CD4-positive, alpha-beta memory T cell (primary cell): ENCODE measurements at regions of chr9 and their contacts with region 1.

Region 1: DNA sequence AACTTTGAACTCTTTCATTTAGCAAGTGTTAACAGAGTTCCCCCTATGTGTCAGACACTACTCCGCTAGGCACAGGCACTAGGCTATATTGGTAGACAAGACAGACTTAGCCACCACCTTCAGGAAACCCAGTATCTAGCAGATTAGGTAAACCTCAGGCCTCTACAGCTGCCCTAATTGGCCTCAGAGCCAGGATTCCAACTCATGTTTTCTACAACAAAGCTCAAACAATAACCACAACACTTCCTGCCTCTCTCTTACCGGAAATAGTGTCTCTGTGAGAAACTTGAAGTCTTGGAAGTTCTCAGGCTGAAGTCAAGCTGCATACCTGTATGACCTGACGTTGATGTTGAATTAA is 116.6 kb upstream of the SLC44A1 start:
- DNase-seq: peak; percentile 84 to 91 (median 89)
- H3K4me3 ChIP-seq: no peak overlapping the region
- H3K4me3 Mint-ChIP-seq: peak overlapping the region in 7 of 8 donors; percentile 33 to 81 (median 75)
- H3K27ac ChIP-seq: no peak overlapping the region
- H3K27ac Mint-ChIP-seq: peak overlapping the region; percentile 26 to 92 (median 83)
- H3K4me1 ChIP-seq: peaks cover 47% of the 10 kb centered on the region
- H3K4me1 Mint-ChIP-seq: peaks cover 40 to 63% (median 53%) of the 10 kb centered on the region in 4 donors
- H3K27me3 ChIP-seq: no peaks in the 10 kb centered on the region
- H3K27me3 Mint-ChIP-seq: peaks cover 0 to 1% of the 10 kb centered on the region in 2 donors

Region 2: DNA sequence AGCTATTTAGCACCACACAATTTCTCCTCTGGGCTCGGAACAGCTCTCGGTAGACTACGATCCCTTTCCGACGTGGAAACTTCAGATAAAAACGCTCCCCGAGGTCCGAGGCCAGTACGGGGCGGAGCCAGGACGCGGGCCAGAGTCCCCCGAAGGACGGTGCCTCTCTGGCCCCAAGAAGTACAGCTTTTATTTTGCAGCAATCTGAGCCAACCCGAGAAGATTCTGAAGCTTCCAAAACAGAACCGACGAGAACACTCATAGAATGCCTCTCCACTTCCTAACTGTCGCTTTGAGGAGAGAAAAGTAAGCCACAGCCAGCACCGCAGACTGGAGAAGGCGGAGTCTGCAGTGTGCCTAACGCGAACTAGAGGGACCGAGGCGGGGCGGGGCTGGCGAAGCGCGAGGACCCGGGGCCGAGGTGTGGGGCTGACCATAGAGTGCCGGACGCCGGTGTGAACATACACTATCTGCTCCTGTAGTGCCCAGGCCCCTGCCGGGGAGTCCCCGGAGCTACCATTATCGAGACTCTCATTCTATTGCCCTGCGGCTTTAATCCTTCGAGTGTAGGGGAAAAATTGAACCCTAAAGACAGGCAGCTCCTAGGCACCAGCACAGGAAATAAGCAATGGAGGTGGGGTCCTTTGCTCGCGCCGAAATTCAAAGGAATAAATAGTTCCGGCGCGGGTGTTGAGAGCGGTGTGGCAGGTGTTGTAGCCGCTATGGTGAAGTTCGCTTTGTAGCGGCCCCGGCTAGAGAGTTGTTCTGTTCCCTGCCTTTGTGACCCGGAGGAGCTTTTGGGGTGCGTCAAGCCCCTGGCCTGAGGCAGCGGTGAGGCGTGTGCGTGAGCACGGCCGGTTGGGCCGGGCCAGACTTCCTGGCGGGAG is 1034.0 kb before region 1 on chr9 and contains the start of gene SMC2:
- CTCF ChIA-PET with region 1: no interaction called
- POLR2A ChIA-PET with region 1: no interaction called
- intact Hi-C with region 1: loop called (anchors 5 kb)
- DNase-seq: peak; percentile 93 to 96 (median 95)
- H3K4me3 ChIP-seq: peak within 1 kb of the TSS; percentile 63 to 90
- H3K4me3 Mint-ChIP-seq: peak within 1 kb of the TSS; percentile 98 to 100 (median 99)
- H3K27ac ChIP-seq: peak within 1 kb of the TSS; percentile 79
- H3K27ac Mint-ChIP-seq: peak within 1 kb of the TSS; percentile 99 to 100 (median 99)
- H3K4me1 ChIP-seq: peaks cover 30% of the 10 kb centered on the region
- H3K4me1 Mint-ChIP-seq: peaks cover 26 to 46% (median 30%) of the 10 kb centered on the region in 4 donors
- H3K27me3 ChIP-seq: no peaks in the 10 kb centered on the region
- H3K27me3 Mint-ChIP-seq: peaks cover 0 to 3% of the 10 kb centered on the region in 2 donors
- total RNA-seq, gene SMC2: 9.7 to 10.4 TPM

Region 3: DNA sequence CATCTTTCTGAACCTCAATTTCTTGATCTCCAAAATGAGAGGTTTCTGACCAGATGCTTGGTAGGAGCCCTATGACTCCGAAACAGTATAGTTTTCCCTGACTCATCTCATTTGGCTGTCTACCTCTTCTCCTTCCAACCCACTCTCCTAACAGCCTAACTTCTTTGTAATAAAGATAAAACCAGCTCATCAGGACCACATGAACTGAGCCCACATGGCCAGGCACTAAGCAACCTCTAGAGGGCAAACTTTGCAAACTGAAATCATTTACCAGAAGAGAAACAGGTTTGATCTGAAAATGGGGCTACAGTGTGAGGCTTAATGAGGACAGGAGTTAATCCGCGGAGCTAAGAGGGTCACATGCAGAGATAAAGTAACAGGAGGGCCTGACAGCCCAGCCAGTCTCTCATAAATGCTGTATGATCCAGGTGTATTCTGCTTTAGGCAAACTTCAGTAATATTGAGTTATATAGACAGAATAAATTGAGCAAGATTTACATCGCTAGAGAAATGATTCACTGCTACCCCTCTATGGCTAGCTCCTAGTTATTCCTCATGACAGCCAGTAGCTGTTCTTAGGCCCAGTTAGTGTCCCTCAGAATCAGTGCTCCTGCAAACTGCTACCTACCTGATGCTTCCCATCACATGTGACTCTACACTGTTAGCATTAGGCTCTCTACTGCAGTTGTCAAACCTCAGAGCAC is 264.5 kb before region 1 on chr9:
- CTCF ChIA-PET with region 1: interaction called, 5 read pairs
- POLR2A ChIA-PET with region 1: no interaction called
- intact Hi-C with region 1: loop called (anchors 1 kb)
- DNase-seq: peak; percentile 51 to 65 (median 60)
- H3K4me3 ChIP-seq: no peak overlapping the region
- H3K4me3 Mint-ChIP-seq: no peak overlapping the region
- H3K27ac ChIP-seq: no peak overlapping the region
- H3K27ac Mint-ChIP-seq: peak overlapping the region in 1 of 7 donors; percentile 50
- H3K4me1 ChIP-seq: no peaks in the 10 kb centered on the region
- H3K4me1 Mint-ChIP-seq: peaks cover 0 to 9% (median 3%) of the 10 kb centered on the region in 4 donors
- H3K27me3 ChIP-seq: no peaks in the 10 kb centered on the region
- H3K27me3 Mint-ChIP-seq: no peaks in the 10 kb centered on the region

Region 4: GRCh38 chr9:104968025-104968982 is 159.5 kb before region 1 on chr9:
- CTCF ChIA-PET with region 1: interaction called, 5 read pairs
- POLR2A ChIA-PET with region 1: interaction called, 4 read pairs
- intact Hi-C with region 1: loop called (anchors 10 kb)
- DNase-seq: peak; percentile 87 to 91 (median 89)
- H3K4me3 ChIP-seq: peak overlapping the region; percentile 78 to 88
- H3K4me3 Mint-ChIP-seq: peak overlapping the region; percentile 89 to 96 (median 94)
- H3K27ac ChIP-seq: peak overlapping the region; percentile 58
- H3K27ac Mint-ChIP-seq: peak overlapping the region; percentile 73 to 95 (median 90)
- H3K4me1 ChIP-seq: peaks cover 14% of the 10 kb centered on the region
- H3K4me1 Mint-ChIP-seq: peaks cover 2 to 17% (median 11%) of the 10 kb centered on the region in 4 donors
- H3K27me3 ChIP-seq: no peaks in the 10 kb centered on the region
- H3K27me3 Mint-ChIP-seq: peaks cover 6 to 13% of the 10 kb centered on the region in 2 donors

Region 5: DNA sequence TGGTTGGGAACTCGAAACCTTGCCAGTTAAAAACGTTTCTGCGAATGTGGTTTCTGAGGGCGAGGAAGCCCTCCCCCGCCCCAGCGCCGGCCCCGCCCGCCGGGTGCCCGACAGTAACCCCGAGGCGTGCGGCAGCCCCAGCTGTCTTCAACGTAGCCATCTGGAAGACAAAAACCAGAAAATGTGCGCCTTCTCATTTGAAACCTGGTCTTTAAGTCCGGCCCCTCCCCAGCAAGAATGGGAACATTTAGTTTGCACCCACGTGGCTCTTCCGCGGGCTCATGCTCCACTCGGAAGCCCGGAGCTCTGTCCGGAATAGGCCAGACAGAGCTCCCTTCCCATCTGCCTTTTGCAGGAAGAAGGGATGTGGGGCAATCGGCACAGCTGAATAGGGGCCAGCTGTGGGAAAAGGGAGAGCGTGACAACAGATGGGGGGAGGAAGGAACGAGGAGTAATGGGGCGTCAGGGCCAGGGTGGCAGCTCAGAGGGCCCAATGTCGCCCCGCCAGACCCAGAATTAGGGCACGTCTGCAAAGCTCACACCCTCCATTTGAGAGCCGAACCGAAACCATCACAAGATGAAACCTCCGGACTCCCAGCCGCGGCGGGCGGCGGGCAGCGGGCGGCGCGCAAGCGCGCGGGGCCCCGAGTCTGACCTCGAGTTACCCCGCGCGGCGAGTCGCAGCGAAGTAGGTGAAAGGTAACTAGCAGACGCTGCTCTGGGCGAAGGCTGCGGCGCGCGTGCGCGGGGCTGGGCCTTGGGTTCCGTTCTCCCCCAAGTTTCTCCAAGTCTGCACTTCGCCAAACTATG is 136.5 kb before region 1 on chr9:
- CTCF ChIA-PET with region 1: interaction called, 3 read pairs
- POLR2A ChIA-PET with region 1: interaction called, 7 read pairs
- intact Hi-C with region 1: loop called (anchors 2 kb)
- DNase-seq: peak; percentile 85 to 88 (median 88)
- H3K4me3 ChIP-seq: peak overlapping the region; percentile 94 to 98
- H3K4me3 Mint-ChIP-seq: peak overlapping the region; percentile 87 to 94 (median 92)
- H3K27ac ChIP-seq: peak overlapping the region; percentile 76
- H3K27ac Mint-ChIP-seq: peak overlapping the region; percentile 96 to 99 (median 98)
- H3K4me1 ChIP-seq: peaks cover 38% of the 10 kb centered on the region
- H3K4me1 Mint-ChIP-seq: peaks cover 21 to 45% (median 33%) of the 10 kb centered on the region in 4 donors
- H3K27me3 ChIP-seq: no peaks in the 10 kb centered on the region
- H3K27me3 Mint-ChIP-seq: peaks cover 0 to 1% of the 10 kb centered on the region in 2 donors

Region 6: GRCh38 chr9:105093685-105094084 is 34.2 kb before region 1 on chr9:
- CTCF ChIA-PET with region 1: no interaction called
- POLR2A ChIA-PET with region 1: no interaction called
- intact Hi-C with region 1: no loop called
- DNase-seq: no peak
- H3K4me3 ChIP-seq: no peak overlapping the region
- H3K4me3 Mint-ChIP-seq: no peak overlapping the region
- H3K27ac ChIP-seq: no peak overlapping the region
- H3K27ac Mint-ChIP-seq: no peak overlapping the region
- H3K4me1 ChIP-seq: no peaks in the 10 kb centered on the region
- H3K4me1 Mint-ChIP-seq: no peaks in the 10 kb centered on the region
- H3K27me3 ChIP-seq: no peaks in the 10 kb centered on the region
- H3K27me3 Mint-ChIP-seq: no peaks in the 10 kb centered on the region

Region 7: GRCh38 chr9:105114964-105115728 is 12.7 kb before region 1 on chr9:
- CTCF ChIA-PET with region 1: interaction called, 3 read pairs
- POLR2A ChIA-PET with region 1: interaction called, 4 read pairs
- intact Hi-C with region 1: loop called (anchors 1 kb)
- DNase-seq: peak in 4 of 5 donors; percentile 23 to 44 (median 36)
- H3K4me3 ChIP-seq: no peak overlapping the region
- H3K4me3 Mint-ChIP-seq: peak overlapping the region; percentile 43 to 82 (median 72)
- H3K27ac ChIP-seq: no peak overlapping the region
- H3K27ac Mint-ChIP-seq: peak overlapping the region in 3 of 7 donors; percentile 8 to 72 (median 43)
- H3K4me1 ChIP-seq: peaks cover 30% of the 10 kb centered on the region
- H3K4me1 Mint-ChIP-seq: peaks cover 25 to 35% (median 28%) of the 10 kb centered on the region in 4 donors
- H3K27me3 ChIP-seq: no peaks in the 10 kb centered on the region
- H3K27me3 Mint-ChIP-seq: no peaks in the 10 kb centered on the region

Region 8: DNA sequence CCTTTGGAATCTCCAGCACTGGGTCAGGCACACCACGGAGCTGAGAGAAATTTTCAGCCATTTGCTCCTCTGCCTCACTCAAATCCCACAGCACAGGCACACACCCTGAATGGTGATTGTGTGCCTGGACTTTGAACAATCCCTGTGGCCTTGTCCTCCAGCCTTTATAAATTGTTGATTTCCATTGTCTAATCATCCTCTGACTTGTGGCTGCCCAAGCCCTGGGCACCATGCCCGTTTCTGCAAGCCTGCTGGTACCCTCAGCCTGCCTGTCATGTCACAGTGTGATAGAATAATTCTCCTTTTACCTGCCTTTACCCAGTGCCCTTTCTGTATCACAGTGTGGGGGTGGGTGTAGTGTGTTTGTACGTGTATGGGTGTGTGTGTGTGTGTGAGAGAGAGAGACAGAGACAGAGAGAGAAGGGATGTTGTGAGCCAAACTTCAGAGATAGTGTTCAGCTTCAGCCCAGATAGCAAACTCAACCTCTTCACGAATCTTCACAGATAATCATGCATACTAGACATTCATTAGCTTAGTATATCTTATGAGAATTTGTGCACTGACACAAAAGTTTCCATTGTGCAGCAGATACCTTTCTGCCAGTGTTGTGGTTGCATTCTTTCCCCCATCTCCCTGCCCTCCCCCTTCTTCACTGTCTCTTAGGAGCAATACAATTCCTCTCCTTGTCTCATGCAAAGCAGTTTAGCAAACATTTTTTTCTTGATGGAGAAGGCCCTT is 88.8 kb after region 1 on chr9:
- CTCF ChIA-PET with region 1: no interaction called
- POLR2A ChIA-PET with region 1: no interaction called
- intact Hi-C with region 1: no loop called
- DNase-seq: no peak
- H3K4me3 ChIP-seq: no peak overlapping the region
- H3K4me3 Mint-ChIP-seq: no peak overlapping the region
- H3K27ac ChIP-seq: no peak overlapping the region
- H3K27ac Mint-ChIP-seq: no peak overlapping the region
- H3K4me1 ChIP-seq: no peaks in the 10 kb centered on the region
- H3K4me1 Mint-ChIP-seq: no peaks in the 10 kb centered on the region
- H3K27me3 ChIP-seq: no peaks in the 10 kb centered on the region
- H3K27me3 Mint-ChIP-seq: peaks cover 4% of the 10 kb centered on the region in 2 donors

Region 9: GRCh38 chr9:105708405-105708804 is 580.6 kb after region 1 on chr9:
- CTCF ChIA-PET with region 1: no interaction called
- POLR2A ChIA-PET with region 1: no interaction called
- intact Hi-C with region 1: no loop called
- DNase-seq: no peak
- H3K4me3 ChIP-seq: no peak overlapping the region
- H3K4me3 Mint-ChIP-seq: peak overlapping the region in 6 of 8 donors; percentile 10 to 73 (median 38)
- H3K27ac ChIP-seq: no peak overlapping the region
- H3K27ac Mint-ChIP-seq: peak overlapping the region in 5 of 7 donors; percentile 24 to 77 (median 63)
- H3K4me1 ChIP-seq: no peaks in the 10 kb centered on the region
- H3K4me1 Mint-ChIP-seq: peaks cover 0 to 5% (median 5%) of the 10 kb centered on the region in 4 donors
- H3K27me3 ChIP-seq: no peaks in the 10 kb centered on the region
- H3K27me3 Mint-ChIP-seq: no peaks in the 10 kb centered on the region

Region 10: GRCh38 chr9:105973951-105974351 is 846.1 kb after region 1 on chr9:
- CTCF ChIA-PET with region 1: no interaction called
- POLR2A ChIA-PET with region 1: no interaction called
- intact Hi-C with region 1: no loop called
- DNase-seq: no peak
- H3K4me3 ChIP-seq: no peak overlapping the region
- H3K4me3 Mint-ChIP-seq: no peak overlapping the region
- H3K27ac ChIP-seq: no peak overlapping the region
- H3K27ac Mint-ChIP-seq: no peak overlapping the region
- H3K4me1 ChIP-seq: no peaks in the 10 kb centered on the region
- H3K4me1 Mint-ChIP-seq: no peaks in the 10 kb centered on the region
- H3K27me3 ChIP-seq: no peaks in the 10 kb centered on the region
- H3K27me3 Mint-ChIP-seq: no peaks in the 10 kb centered on the region